ENCODE measurements at regions of chr15 and their contacts with region 1.

Region 1: GRCh38 chr15:97866959-97867358 is 93.5 kb upstream of the ARRDC4 start:
- DNase-seq: no peak
- ATAC-seq: peak in 1 of 8 donors; percentile 57
- H3K4me3 ChIP-seq: no peak overlapping the region
- H3K27ac ChIP-seq: no peak overlapping the region
- H3K4me1 ChIP-seq: peaks cover 0 to 5% (median 0%) of the 10 kb centered on the region in 9 donors
- H3K27me3 ChIP-seq: peaks cover 0 to 5% (median 0%) of the 10 kb centered on the region in 7 donors
- CTCF ChIP-seq: no peak

Region 2: GRCh38 chr15:97783240-97783639 is 83.7 kb before region 1 on chr15:
- intact Hi-C with region 1: loop called in 1 of 10 experiments (anchors 10 kb)
- DNase-seq: no peak
- ATAC-seq: no peak
- H3K4me3 ChIP-seq: no peak overlapping the region
- H3K27ac ChIP-seq: no peak overlapping the region
- H3K4me1 ChIP-seq: no peaks in the 10 kb centered on the region
- H3K27me3 ChIP-seq: no peaks in the 10 kb centered on the region
- CTCF ChIP-seq: no peak

Region 3: GRCh38 chr15:98025235-98025634 is 158.3 kb after region 1 on chr15:
- intact Hi-C with region 1: no loop called
- DNase-seq: no peak
- ATAC-seq: peak in 1 of 8 donors; percentile 46
- H3K4me3 ChIP-seq: no peak overlapping the region
- H3K27ac ChIP-seq: no peak overlapping the region
- H3K4me1 ChIP-seq: no peaks in the 10 kb centered on the region
- H3K27me3 ChIP-seq: peaks cover 0 to 18% (median 8%) of the 10 kb centered on the region in 7 donors
- CTCF ChIP-seq: no peak

Measured in heart right ventricle (tissue), 16 donors.